ENCODE measurements at regions of chr1 and their contacts with region 1.

Region 1: DNA sequence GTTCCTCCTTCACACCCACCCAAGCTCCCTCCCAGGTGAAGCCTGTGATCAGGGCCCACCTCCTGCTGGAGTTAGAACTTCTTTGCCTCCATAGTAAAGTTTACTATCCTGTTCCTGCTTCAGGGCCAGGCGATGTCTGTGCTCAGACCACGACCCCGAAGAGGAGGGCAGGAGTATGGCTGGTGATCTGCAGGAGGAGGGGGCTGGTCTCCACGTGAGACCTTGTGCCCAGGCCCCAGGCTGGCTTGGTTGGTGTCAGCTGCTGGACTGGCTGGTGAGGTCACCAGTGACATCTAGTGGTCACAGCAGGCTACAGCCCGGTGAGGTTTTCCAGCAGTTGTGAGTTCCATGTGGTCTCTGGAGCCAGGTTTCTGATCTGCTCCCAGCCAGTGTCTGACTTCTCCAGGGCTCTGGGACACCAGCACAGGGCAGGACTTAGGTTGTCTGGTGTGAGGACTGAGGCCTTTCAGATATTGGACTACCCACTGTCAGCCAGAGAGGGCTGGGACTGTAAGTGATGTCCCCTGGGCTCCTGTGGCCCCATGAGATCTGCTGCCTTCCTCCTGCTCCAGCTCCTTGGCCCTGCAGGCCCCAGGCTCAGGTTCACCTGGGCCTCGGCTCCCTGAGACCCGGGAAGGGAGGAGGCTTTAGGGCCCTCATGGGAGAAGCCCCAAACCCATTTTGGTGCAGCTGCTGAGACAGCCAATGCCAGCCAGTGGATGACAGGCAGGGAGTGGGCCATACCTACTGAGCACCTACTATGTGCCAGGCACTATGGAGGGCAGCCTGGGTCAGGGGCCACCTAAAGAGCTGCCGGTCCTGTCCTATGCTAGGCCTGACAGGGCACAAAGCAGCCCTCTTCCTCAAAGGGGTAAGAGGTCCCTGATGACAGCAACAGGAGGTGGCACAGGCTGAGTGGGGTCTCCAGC is 6.0 kb upstream of the UBL4B start:
- DNase-seq: peak; percentile 84
- H3K27ac ChIP-seq: no peak overlapping the region
- CTCF ChIP-seq: peak; percentile 95

Region 2: GRCh38 chr1:109892561-109893368 is 213.5 kb before region 1 on chr1:
- CTCF ChIA-PET with region 1: no interaction called
- POLR2A ChIA-PET with region 1: no interaction called
- DNase-seq: peak; percentile 64
- H3K27ac ChIP-seq: peak overlapping the region; percentile 43
- CTCF ChIP-seq: no peak

Region 3: DNA sequence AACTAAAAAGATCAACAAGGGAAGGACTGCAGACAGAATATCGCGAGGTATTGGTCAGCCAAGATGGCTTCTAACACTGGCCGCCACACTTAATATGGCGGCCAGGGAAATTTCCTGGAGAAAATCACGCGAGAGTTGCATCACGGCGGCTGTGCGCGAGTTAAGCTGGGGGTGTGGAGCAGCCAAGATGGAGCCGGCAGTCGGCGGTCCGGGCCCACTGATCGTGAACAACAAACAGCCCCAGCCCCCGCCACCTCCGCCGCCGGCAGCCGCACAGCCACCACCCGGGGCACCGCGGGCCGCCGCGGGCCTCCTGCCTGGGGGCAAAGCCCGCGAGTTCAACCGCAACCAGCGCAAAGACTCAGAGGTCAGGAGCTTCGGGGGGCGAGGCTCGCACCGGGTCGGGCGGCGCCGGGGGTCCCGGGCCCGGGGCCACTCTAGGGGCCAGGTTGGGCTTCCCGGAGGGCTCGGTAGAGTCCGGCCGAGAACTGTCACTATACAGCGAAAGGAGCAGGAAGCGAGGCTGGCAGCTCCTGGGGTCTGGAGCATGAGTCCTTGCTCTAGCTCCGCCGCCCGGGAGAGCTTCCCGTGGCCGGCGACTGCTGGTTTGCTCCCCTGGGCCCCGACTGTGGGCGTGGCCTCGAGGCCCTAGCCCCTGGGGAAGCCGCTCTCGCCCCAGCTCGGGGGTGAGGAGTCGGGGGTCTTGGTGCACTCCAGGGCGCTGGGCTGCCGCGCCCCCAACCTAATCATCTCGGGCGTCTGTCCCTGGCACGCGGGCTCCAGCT is 71.6 kb before region 1 on chr1 and contains the start of gene STRIP1:
- CTCF ChIA-PET with region 1: interaction called, 13 read pairs
- POLR2A ChIA-PET with region 1: no interaction called
- DNase-seq: peak; percentile 92
- H3K27ac ChIP-seq: peak within 1 kb of the TSS; percentile 79
- CTCF ChIP-seq: no peak

Region 4: DNA sequence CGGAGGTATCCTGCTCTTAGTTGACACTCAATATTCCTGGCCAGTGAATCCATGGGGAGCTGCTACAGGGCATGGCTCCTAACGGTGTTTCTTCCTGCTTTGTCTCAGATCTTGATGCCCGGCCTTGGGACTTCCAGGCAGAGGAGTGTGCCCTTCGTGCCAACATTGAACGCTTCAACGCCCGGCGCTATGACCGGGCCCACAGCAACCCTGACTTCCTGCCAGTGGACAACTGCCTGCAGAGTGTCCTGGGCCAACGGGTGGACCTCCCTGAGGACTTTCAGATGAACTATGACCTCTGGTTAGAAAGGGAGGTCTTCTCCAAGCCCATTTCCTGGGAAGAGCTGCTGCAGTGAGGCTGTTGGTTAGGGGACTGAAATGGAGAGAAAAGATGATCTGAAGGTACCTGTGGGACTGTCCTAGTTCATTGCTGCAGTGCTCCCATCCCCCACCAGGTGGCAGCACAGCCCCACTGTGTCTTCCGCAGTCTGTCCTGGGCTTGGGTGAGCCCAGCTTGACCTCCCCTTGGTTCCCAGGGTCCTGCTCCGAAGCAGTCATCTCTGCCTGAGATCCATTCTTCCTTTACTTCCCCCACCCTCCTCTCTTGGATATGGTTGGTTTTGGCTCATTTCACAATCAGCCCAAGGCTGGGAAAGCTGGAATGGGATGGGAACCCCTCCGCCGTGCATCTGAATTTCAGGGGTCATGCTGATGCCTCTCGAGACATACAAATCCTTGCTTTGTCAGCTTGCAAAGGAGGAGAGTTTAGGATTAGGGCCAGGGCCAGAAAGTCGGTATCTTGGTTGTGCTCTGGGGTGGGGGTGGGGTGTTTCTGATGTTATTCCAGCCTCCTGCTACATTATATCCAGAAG is 52.5 kb before region 1 on chr1:
- CTCF ChIA-PET with region 1: interaction called, 27 read pairs
- POLR2A ChIA-PET with region 1: no interaction called
- DNase-seq: peak; percentile 55
- H3K27ac ChIP-seq: no peak overlapping the region
- CTCF ChIP-seq: peak; percentile 95

Region 5: GRCh38 chr1:110087812-110088738 is 18.2 kb before region 1 on chr1:
- CTCF ChIA-PET with region 1: interaction called, 34 read pairs
- POLR2A ChIA-PET with region 1: no interaction called
- DNase-seq: peak; percentile 72
- H3K27ac ChIP-seq: no peak overlapping the region
- CTCF ChIP-seq: peak; percentile 65